ENCODE measurements at regions of chr21 and their contacts with region 1.

Region 1: DNA sequence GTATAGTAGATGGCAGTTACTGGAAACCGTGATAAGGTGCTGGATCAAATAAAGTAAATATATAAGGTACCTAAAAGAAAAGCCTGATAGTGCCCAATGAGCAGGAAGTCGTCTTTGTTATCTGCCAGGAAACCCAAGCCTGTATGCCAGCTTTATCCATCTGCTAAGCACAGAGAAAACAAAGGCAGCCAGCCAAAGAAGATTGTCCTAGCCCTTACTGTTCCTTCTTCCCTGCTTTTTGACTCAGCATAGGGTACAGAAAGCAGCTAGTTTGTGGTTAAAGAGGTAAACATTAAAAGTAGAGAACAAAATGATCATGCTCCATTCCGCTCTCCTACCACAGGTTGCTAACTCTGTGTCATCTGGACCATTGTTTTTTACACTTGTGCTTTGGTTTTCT is 10.1 kb downstream of the KRTAP22-2 start:
- DNase-seq: no peak

Region 2: GRCh38 chr21:30592140-30592539 is 12.0 kb after region 1 on chr21 and contains the start of gene KRTAP6-3:
- intact Hi-C with region 1: loop called in 1 of 2 experiments (anchors 1 kb)
- DNase-seq: no peak
- total RNA-seq, gene KRTAP6-3: not detected